BJ (cell line): ENCODE measurements at regions of chr6 and their contacts with region 1.

Region 1: DNA sequence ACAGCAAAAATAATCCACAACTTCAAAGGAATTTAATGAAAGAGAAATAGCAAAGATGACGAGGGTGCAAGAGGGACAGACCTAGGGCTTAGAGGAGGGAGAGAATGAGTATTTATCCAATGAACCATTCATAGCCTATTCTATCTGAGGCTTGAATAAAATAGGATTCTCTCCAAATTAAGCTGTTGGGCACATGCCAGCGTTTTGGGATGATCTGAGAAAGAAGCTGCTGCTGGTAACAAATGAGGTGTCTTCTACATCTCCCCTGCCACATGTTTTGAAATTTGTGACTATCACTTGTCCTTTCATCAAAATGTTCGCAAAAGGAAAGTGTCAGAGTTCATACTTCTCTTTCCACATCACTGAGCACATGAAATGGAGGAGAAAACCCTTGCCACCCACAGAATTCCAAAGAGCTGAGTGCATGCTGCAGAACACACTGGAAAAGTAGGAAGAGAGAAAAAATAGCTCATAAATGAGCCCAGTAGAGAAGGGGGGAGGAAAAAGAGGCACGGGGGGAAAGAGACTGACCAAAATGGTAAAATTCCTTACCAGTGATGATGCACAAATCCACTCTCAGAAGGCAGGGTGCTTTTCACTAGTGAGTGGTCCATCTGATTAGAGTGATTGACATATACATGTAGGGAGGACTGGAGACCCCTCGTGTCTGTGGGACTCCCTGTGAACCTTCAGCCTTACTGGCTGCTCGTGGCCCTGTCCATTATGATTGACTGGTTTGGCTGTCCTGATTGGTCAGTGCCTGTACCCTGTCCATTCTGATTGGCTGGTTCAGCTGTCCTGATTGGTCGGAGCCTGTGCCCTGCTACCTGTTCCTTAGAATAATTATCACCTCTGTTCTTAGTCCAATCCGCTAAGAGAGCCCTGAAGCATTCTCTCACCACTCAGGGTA is 180.5 kb downstream of the OGFRL1 start:
- DNase-seq: peak; percentile 89
- H3K4me3 ChIP-seq: peak overlapping the region; percentile 23
- H3K27me3 ChIP-seq: no peaks in the 10 kb centered on the region
- CTCF ChIP-seq: no peak

Region 2: DNA sequence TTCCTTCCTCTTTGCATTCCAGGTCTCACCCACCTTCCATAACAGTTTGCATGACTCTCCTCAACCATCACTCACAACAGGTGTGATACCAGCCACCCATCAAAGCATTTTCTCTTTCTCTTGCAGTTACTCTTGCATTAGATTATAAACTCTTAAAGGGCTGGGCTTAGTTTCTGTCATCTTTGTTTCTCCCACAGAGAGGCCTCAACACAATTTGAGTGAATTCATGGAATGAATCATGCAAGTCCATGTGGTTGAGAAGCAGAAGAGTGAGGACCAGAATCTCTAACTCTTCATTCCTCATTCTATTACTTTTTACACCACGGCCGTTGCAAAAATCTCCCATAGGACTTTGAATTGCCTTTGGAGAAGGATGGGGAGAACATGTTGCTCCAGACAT is 149.1 kb before region 1 on chr6:
- CTCF ChIA-PET with region 1: no interaction called
- POLR2A ChIA-PET with region 1: no interaction called
- DNase-seq: no peak
- H3K4me3 ChIP-seq: no peak overlapping the region
- H3K27me3 ChIP-seq: no peaks in the 10 kb centered on the region
- CTCF ChIP-seq: no peak

Region 3: GRCh38 chr6:71496018-71496721 is 27.1 kb after region 1 on chr6:
- CTCF ChIA-PET with region 1: no interaction called
- POLR2A ChIA-PET with region 1: no interaction called
- DNase-seq: no peak
- H3K4me3 ChIP-seq: no peak overlapping the region
- H3K27me3 ChIP-seq: no peaks in the 10 kb centered on the region
- CTCF ChIP-seq: no peak

Region 4: GRCh38 chr6:71585472-71585871 is 116.4 kb after region 1 on chr6:
- CTCF ChIA-PET with region 1: no interaction called
- POLR2A ChIA-PET with region 1: no interaction called
- DNase-seq: no peak
- H3K4me3 ChIP-seq: no peak overlapping the region
- H3K27me3 ChIP-seq: no peaks in the 10 kb centered on the region
- CTCF ChIP-seq: no peak

Region 5: DNA sequence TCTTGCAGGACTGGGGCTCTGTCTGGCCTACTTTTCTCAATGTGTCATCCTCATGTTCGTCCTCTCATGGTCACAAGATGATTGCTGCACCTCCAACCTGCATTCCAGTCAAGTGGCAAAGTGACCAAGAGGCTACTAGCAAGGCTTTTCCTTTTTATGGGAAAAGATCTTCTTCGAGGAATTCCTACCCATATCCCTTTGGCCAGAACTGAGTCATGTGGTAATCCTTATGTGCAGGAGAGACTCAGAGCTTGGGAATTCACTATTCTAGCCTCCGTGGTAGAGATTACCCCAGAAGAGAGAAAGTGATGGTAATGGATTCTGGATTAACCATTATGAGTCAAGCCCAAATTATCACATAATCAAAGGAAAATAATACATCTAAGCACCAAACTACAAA is 1315.5 kb after region 1 on chr6:
- CTCF ChIA-PET with region 1: no interaction called
- POLR2A ChIA-PET with region 1: interaction called, 10 read pairs
- DNase-seq: no peak
- H3K4me3 ChIP-seq: no peak overlapping the region
- H3K27me3 ChIP-seq: no peaks in the 10 kb centered on the region
- CTCF ChIP-seq: no peak